Esophagus muscularis mucosa (tissue), 4 donors: ENCODE measurements at regions of chr13 and their contacts with region 1.

Region 1: GRCh38 chr13:113863436-113864272 is at the start of gene GAS6:
- DNase-seq: no peak
- H3K4me3 ChIP-seq: peak within 1 kb of the TSS; percentile 84 to 94 (median 90)
- H3K27ac ChIP-seq: peak within 1 kb of the TSS; percentile 96 to 99 (median 98)
- H3K4me1 ChIP-seq: peaks cover 38 to 64% (median 51%) of the 10 kb centered on the region in 4 donors
- H3K27me3 ChIP-seq: no peaks in the 10 kb centered on the region
- CTCF ChIP-seq: peak in 2 of 3 experiments; percentile 22 to 23
- EP300 ChIP-seq: no peak
- POLR2A ChIP-seq: no peak
- total RNA-seq, gene GAS6: 241 to 459 (median 346) TPM

Region 2: GRCh38 chr13:113083402-113084061 is 780.1 kb before region 1 on chr13:
- intact Hi-C with region 1: no loop called
- DNase-seq: no peak
- H3K4me3 ChIP-seq: no peak overlapping the region
- H3K27ac ChIP-seq: no peak overlapping the region
- H3K4me1 ChIP-seq: peaks cover 0 to 11% (median 5%) of the 10 kb centered on the region in 4 donors
- H3K27me3 ChIP-seq: peaks cover 0 to 43% (median 0%) of the 10 kb centered on the region in 4 donors
- CTCF ChIP-seq: no peak
- EP300 ChIP-seq: no peak
- POLR2A ChIP-seq: no peak

Region 3: DNA sequence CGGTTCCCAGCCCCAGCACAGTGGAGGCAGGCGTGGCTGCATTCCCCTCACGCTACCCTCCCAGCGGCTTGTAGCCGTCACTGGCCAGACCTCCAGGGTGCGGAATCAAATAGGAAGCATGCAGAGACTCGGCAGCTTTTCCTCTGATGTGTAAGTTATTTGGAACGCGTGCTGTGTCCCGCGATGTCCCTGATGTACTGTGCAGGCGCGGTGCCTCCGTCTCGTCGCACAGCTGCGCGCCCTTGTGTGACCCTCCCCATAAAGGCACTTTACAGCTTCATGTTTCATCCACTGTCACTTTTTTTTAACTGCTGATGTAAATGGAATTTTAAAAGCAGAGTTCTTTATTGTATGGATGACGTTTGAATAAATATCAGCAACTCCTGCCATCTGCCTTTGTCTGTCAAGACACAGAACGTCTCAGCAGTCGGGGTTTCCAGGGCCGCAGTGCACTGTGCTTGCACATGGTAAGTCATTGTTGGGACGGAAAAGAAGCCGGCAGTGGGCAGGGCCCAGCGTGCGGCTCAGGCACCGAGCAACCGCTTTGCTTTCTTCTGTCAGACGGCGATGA is 765.4 kb before region 1 on chr13:
- intact Hi-C with region 1: no loop called
- DNase-seq: no peak
- H3K4me3 ChIP-seq: no peak overlapping the region
- H3K27ac ChIP-seq: no peak overlapping the region
- H3K4me1 ChIP-seq: no peaks in the 10 kb centered on the region
- H3K27me3 ChIP-seq: peaks cover 0 to 44% (median 0%) of the 10 kb centered on the region in 4 donors
- CTCF ChIP-seq: no peak
- EP300 ChIP-seq: no peak
- POLR2A ChIP-seq: no peak

Region 4: GRCh38 chr13:113746143-113746525 is 117.5 kb before region 1 on chr13:
- intact Hi-C with region 1: no loop called
- DNase-seq: no peak
- H3K4me3 ChIP-seq: no peak overlapping the region
- H3K27ac ChIP-seq: no peak overlapping the region
- H3K4me1 ChIP-seq: no peaks in the 10 kb centered on the region
- H3K27me3 ChIP-seq: peaks cover 0 to 8% (median 0%) of the 10 kb centered on the region in 4 donors
- CTCF ChIP-seq: no peak
- EP300 ChIP-seq: no peak
- POLR2A ChIP-seq: no peak

Region 5: GRCh38 chr13:113904411-113904810 is 40.8 kb after region 1 on chr13:
- intact Hi-C with region 1: loop called (anchors 2 kb)
- DNase-seq: peak; percentile 91
- H3K4me3 ChIP-seq: no peak overlapping the region
- H3K27ac ChIP-seq: peak overlapping the region; percentile 81 to 89 (median 87)
- H3K4me1 ChIP-seq: peaks cover 9 to 69% (median 64%) of the 10 kb centered on the region in 4 donors
- H3K27me3 ChIP-seq: no peaks in the 10 kb centered on the region
- CTCF ChIP-seq: peak; percentile 63 to 80 (median 77)
- EP300 ChIP-seq: no peak
- POLR2A ChIP-seq: no peak